ENCODE measurements at regions of chr2 and their contacts with region 1.

Region 1: GRCh38 chr2:54723131-54723995 is at the start of gene EML6:
- DNase-seq: peak; percentile 98 to 99
- ATAC-seq: peak; percentile 98 to 100 (median 99)
- H3K4me3 ChIP-seq: peak within 1 kb of the TSS; percentile 88
- H3K27ac ChIP-seq: peak within 1 kb of the TSS; percentile 64
- H3K4me1 ChIP-seq: no peaks in the 10 kb centered on the region
- H3K27me3 ChIP-seq: no peaks in the 10 kb centered on the region
- CTCF ChIP-seq: peak; percentile 16
- total RNA-seq, gene EML6: 1.0 to 8.0 (median 3.2) TPM

Region 2: DNA sequence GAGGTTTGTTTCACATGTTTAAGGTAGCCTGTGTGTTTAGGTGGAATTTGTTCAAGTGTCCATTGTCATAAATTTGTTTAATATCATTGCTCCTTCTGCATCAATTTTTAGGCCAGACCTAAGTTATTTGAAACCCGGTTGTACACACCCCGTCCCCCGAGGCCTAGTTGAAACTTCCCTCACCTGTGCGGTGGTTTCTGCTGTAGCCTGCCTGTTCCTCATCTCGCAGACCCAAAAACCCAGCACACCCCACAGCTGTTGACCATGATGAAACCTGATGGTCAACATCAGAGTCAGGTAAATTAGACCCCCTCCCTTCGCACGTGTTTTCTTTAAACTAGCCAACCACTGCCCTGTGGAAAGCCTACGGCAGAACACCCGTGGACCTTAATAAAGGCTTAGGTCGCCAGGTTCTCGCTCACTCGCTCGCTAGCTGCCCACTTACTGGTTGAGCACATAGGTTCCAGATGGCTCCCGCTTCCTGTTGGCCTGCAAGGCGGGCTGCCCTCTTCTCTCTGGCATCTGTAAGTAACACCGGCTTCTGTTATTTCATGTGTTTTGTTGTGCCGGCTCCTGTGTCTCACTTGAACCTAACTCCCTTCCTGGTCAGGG is 64.5 kb after region 1 on chr2:
- intact Hi-C with region 1: no loop called
- DNase-seq: no peak
- ATAC-seq: no peak
- H3K4me3 ChIP-seq: no peak overlapping the region
- H3K27ac ChIP-seq: no peak overlapping the region
- H3K4me1 ChIP-seq: no peaks in the 10 kb centered on the region
- H3K27me3 ChIP-seq: no peaks in the 10 kb centered on the region
- CTCF ChIP-seq: no peak

Region 3: DNA sequence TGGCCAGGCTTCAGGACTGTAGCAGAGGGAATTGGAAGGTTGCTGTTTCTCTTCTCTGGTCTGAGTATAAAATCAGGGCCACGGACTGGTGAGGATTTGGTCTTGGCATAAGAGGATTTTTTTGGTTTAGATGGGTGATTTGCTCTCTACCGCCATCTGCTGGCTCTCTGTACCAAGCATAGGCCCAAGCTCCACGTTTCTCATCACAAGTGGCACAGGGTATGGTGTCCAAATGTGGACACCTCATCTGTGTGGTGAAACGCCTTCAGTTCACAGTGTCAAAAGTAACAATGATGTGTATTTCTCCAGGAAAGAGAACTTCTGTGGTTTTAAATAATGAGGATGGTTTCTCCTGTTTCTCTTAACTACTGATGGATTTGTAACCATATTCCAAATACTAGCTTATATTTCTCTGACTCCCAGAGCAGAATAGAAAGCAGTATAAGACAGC is 115.2 kb after region 1 on chr2:
- intact Hi-C with region 1: loop called in 1 of 2 experiments (anchors 2 kb)
- DNase-seq: peak; percentile 67 to 70
- ATAC-seq: peak; percentile 77 to 94 (median 86)
- H3K4me3 ChIP-seq: no peak overlapping the region
- H3K27ac ChIP-seq: no peak overlapping the region
- H3K4me1 ChIP-seq: no peaks in the 10 kb centered on the region
- H3K27me3 ChIP-seq: no peaks in the 10 kb centered on the region
- CTCF ChIP-seq: peak; percentile 93

Region 4: DNA sequence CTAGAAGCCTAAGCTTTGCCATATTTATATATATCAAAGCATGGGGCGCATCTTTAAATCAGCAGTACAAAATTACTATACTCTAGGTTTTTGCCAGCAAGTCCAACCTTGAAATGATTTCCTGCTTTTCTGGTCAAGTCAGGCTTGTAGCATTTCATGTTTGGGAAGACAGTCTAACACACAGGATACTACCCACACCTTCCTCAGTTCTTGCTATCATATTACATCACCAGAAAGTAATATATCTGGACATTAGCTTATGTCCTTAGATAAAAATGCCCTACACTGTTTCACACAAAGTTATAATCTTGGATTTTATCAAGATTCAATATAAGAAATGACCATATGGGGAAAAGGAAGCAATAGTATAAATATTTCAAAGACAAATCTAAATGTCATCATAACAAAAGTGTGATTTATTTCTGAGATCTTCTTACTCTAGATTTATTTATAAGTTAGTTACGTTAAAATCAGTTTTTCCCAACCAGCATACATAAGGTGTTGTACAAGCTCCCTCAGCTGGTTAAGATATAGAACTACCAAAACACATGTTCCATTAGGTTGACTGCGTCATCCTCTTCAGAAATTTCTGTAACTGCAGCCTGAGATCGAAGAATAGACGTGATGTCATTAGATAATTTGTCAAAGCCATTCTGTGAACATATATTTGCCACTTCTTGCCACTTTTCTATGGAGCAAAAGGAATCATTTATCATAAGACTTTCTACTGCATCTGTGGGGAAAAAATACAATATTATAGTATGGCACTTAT is 452.1 kb after region 1 on chr2:
- intact Hi-C with region 1: loop called in 1 of 2 experiments (anchors 10 kb)
- DNase-seq: no peak
- ATAC-seq: peak; percentile 80 to 96 (median 86)
- H3K4me3 ChIP-seq: no peak overlapping the region
- H3K27ac ChIP-seq: no peak overlapping the region
- H3K4me1 ChIP-seq: peaks cover 6% of the 10 kb centered on the region
- H3K27me3 ChIP-seq: no peaks in the 10 kb centered on the region
- CTCF ChIP-seq: peak; percentile 68

Measured in psoas muscle (tissue), 8 donors.